ENCODE measurements at regions of chr16 and their contacts with region 1.

Region 1: DNA sequence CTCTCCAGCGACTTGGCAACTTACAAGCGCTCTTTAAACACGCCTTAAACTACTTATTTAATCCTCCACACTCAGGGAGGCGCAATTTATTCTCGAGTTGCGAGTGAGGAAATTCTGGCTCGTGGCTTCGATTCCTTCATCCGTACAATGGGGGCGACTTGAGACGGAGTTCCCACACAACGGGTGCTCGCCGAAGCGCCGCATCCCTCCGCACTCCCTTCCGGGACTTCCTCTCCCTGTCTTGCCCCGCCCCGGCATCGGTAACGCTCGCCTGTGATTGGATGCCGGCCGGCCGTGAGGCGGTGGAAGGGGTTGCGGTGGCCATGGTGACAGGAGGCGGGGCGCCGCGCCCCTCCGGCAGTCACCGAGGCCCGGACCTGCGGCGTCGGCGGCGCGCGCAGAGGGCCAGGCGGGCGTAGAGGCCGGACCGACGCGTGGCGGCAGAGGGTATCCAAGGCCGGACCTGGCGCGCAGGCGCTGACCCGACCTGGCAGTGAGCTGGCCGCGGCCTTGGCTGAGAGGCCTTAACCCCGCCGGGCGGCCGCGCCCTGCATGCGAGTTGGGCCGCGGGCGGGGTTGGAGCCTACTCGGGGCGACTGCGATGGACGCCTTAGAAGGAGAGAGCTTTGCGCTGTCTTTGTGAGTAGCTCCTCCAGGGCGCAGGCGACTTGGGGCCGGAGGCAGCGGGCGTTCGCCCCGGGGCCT is at the start of gene ARL2BP:
- DNase-seq: peak; percentile 99
- H3K4me3 ChIP-seq: peak within 1 kb of the TSS; percentile 75 to 89 (median 85)
- H3K27ac ChIP-seq: peak within 1 kb of the TSS; percentile 72
- H3K4me1 ChIP-seq: peaks cover 11% of the 10 kb centered on the region
- H3K27me3 ChIP-seq: no peaks in the 10 kb centered on the region
- CTCF ChIP-seq: peak; percentile 3 to 10
- POLR2A ChIP-seq: peak; percentile 89
- total RNA-seq, gene ARL2BP: 76.7 and 80.4 TPM in 2 replicates

Region 2: DNA sequence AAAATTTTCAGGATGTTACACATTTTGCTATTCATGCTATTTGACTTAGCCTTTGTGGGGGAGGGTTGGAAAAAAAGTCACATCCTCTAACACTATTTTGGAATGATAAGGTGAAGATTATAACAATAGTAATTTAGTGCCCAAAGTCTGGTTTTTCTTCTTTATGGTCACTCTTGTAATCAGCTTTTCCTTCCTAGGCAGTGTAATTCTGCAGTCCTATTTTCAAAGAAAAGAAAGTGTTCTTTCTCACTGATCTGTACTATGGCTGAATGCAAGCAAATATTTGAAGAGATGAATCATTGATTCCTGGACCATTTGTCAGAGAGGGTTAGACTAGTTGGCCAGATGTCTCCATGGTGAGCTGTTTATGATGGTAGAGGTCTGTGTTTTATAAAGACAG is 50.4 kb before region 1 on chr16:
- CTCF ChIA-PET with region 1: interaction called, 3 read pairs
- POLR2A ChIA-PET with region 1: no interaction called
- dilution Hi-C with region 1: no loop called
- intact Hi-C with region 1: loop called (anchors 2 kb)
- DNase-seq: peak; percentile 89
- H3K4me3 ChIP-seq: peak overlapping the region in 1 of 3 experiments; percentile 60
- H3K27ac ChIP-seq: peak overlapping the region; percentile 92
- H3K4me1 ChIP-seq: peaks cover 59% of the 10 kb centered on the region
- H3K27me3 ChIP-seq: no peaks in the 10 kb centered on the region
- CTCF ChIP-seq: no peak
- POLR2A ChIP-seq: no peak

Region 3: GRCh38 chr16:57260294-57260929 is 15.5 kb after region 1 on chr16:
- CTCF ChIA-PET with region 1: interaction called, 18 read pairs
- POLR2A ChIA-PET with region 1: interaction called, 8 read pairs
- dilution Hi-C with region 1: no loop called
- intact Hi-C with region 1: loop called (anchors 1 kb)
- DNase-seq: peak; percentile 98
- H3K4me3 ChIP-seq: no peak overlapping the region
- H3K27ac ChIP-seq: peak overlapping the region; percentile 92
- H3K4me1 ChIP-seq: peaks cover 23% of the 10 kb centered on the region
- H3K27me3 ChIP-seq: no peaks in the 10 kb centered on the region
- CTCF ChIP-seq: no peak
- POLR2A ChIP-seq: peak; percentile 51

Region 4: GRCh38 chr16:57284208-57284951 is 39.5 kb after region 1 on chr16 and contains the start of gene PLLP:
- CTCF ChIA-PET with region 1: interaction called, 6 read pairs
- POLR2A ChIA-PET with region 1: no interaction called
- dilution Hi-C with region 1: no loop called
- intact Hi-C with region 1: loop called (anchors 2 kb)
- DNase-seq: peak; percentile 38
- H3K4me3 ChIP-seq: peak within 1 kb of the TSS; percentile 8 to 38 (median 16)
- H3K27ac ChIP-seq: no peak within 1 kb of the TSS
- H3K4me1 ChIP-seq: peaks cover 18% of the 10 kb centered on the region
- H3K27me3 ChIP-seq: no peaks in the 10 kb centered on the region
- CTCF ChIP-seq: no peak
- POLR2A ChIP-seq: no peak
- total RNA-seq, gene PLLP: 3.1 and 4.4 TPM in 2 replicates

Region 5: GRCh38 chr16:57422026-57422944 is 177.4 kb after region 1 on chr16:
- CTCF ChIA-PET with region 1: interaction called, 12 read pairs
- POLR2A ChIA-PET with region 1: no interaction called
- dilution Hi-C with region 1: no loop called
- intact Hi-C with region 1: loop called (anchors 1 kb)
- DNase-seq: peak; percentile 67
- H3K4me3 ChIP-seq: no peak overlapping the region
- H3K27ac ChIP-seq: no peak overlapping the region
- H3K4me1 ChIP-seq: peaks cover 5% of the 10 kb centered on the region
- H3K27me3 ChIP-seq: no peaks in the 10 kb centered on the region
- CTCF ChIP-seq: peak; percentile 68 to 72
- POLR2A ChIP-seq: no peak

Measured in endothelial cell of umbilical vein (primary cell).